BJ (cell line): ENCODE measurements at regions of chr2 and their contacts with region 1.

Region 1: DNA sequence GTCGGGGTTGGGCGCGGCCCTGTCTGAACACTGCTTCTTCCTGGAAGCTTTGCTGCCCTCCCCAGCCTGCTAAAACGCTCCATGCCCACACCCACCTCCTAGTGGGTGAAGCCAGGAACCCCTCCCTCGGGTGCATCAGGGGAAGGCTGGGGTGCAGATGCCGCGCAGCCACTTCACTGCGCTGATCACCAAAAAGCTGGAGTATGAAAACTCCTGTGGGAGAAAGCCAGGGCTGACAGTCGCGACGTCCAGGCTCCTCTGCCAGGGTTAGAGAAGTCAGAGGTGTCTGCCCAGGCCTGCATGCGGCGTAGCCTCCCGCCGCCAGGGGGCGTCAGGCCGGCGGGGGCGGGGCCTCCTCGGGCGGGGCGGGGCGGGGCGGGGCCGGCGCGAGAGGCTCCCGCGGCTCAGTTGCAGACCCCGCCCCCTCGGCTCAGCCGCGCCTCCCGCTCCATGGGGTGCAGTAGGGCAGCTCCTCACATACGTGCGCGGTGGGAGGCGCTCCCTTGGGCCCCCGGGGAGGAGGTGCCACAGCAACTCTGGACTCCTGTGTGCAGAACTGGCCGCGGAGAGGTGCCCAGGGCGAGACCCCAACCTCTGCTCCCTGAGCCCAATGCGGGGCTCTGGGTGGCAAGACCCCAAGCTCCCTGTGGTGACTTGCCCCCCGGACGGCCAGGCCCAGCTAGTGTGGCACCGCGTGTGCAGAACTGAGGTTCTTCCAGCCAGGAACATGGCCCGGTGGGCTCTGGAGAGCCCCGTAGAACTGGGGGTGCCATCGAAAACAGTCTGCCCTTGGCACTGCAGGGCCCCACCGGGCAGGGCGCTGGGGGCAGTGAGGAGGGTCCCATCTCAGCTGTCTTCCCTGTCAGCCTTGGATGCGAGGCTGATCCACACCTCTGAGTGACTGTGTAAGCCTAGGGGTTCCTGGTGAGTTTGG is 1.8 kb upstream of the RNPEPL1 start:
- DNase-seq: no peak
- H3K4me3 ChIP-seq: peak overlapping the region; percentile 25
- H3K27me3 ChIP-seq: no peaks in the 10 kb centered on the region
- CTCF ChIP-seq: peak; percentile 77

Region 2: GRCh38 chr2:240143801-240144648 is 422.4 kb before region 1 on chr2:
- CTCF ChIA-PET with region 1: no interaction called
- POLR2A ChIA-PET with region 1: no interaction called
- DNase-seq: no peak
- H3K4me3 ChIP-seq: no peak overlapping the region
- H3K27me3 ChIP-seq: peaks cover 3% of the 10 kb centered on the region
- CTCF ChIP-seq: peak; percentile 94

Region 3: GRCh38 chr2:240363746-240364581 is 202.5 kb before region 1 on chr2:
- CTCF ChIA-PET with region 1: no interaction called
- POLR2A ChIA-PET with region 1: no interaction called
- DNase-seq: no peak
- H3K4me3 ChIP-seq: no peak overlapping the region
- H3K27me3 ChIP-seq: no peaks in the 10 kb centered on the region
- CTCF ChIP-seq: no peak

Region 4: GRCh38 chr2:240579771-240580614 is 13.5 kb after region 1 on chr2:
- CTCF ChIA-PET with region 1: interaction called, 34 read pairs
- POLR2A ChIA-PET with region 1: no interaction called
- DNase-seq: peak; percentile 77
- H3K4me3 ChIP-seq: no peak overlapping the region
- H3K27me3 ChIP-seq: no peaks in the 10 kb centered on the region
- CTCF ChIP-seq: peak; percentile 9; the same call in 1 of the 2 replicates

Region 5: DNA sequence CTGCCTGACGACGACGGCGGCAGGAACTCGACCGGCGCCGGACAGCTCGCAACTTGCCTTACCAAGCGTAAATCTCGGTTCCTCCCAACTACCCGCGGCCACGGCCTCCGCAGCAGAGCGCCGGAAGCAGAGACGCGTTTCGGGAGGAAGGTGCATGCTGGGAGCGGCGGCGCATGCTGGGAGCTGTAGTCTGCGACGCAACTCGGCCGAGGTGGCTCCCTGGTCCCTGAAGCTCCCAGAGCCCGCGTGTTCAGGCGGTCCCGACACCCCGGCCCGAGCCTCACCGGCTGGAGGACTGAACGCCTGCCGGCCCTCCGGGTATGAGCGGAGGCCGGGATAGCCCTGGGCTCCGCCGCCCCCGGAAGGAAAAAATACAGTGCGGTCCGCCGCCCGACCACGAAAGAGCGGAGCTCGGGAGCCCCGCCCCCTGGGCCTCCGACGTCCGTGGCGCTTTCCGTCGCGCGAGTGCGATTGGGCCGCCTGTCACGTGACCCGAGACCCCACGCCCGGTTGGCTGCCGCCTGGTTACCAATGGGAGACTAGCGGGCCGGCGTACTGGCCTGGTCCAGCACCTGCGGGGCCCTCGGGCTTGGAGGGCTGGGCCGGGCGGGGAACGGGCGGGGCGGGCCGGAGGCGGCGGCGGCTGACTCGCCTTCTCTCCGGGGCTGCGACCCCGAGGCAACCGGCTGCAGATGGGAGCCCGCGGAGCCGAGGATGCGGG is 19.9 kb after region 1 on chr2 and contains the start of gene CAPN10:
- CTCF ChIA-PET with region 1: interaction called, 34 read pairs
- POLR2A ChIA-PET with region 1: interaction called, 4 read pairs
- DNase-seq: peak; percentile 58
- H3K4me3 ChIP-seq: peak within 1 kb of the TSS; percentile 92
- H3K27me3 ChIP-seq: no peaks in the 10 kb centered on the region
- CTCF ChIP-seq: no peak
- polyA plus RNA-seq, gene CAPN10: 7.6 and 14.9 TPM in 2 replicates